ENCODE measurements at regions of chr2 and their contacts with region 1.

Region 1: DNA sequence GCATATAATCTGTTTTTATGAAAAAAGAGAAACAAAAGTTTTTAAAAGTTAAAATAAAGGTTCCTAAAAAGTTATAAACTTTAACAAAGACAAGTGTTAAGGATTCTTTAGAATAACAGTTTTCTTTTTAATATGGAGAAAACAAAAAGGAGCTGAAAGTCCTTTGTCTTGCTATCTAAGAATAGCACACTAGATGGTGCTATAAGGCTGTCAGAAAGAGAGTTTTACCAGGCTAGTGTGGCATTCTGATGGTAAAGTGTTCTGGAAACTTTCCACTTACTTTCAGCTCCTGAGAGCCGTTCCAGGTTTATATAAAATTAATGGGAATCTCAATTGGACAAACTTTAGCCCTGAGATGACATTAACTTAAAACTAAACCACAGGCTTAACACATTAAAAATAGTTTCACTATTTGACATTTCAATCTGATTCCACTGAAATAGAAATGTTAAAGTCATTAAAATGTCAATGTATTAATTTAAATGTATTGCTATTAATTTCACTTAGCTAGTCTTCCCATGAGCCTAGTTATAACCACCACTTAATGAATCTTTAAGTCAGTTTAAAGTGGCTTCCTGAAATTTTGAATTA is 3.7 kb downstream of the FBXO48 start:
- H3K4me3 ChIP-seq: no peak overlapping the region
- H3K27ac ChIP-seq: no peak overlapping the region
- H3K4me1 ChIP-seq: peaks cover 4% of the 10 kb centered on the region; the same call in 1 of the 2 replicates
- CTCF ChIP-seq: peak; percentile 17; the same call in 1 of the 2 replicates

Region 2: GRCh38 chr2:68423966-68424650 is 39.3 kb before region 1 on chr2:
- CTCF ChIA-PET with region 1: no interaction called
- POLR2A ChIA-PET with region 1: no interaction called
- H3K4me3 ChIP-seq: no peak overlapping the region
- H3K27ac ChIP-seq: no peak overlapping the region
- H3K4me1 ChIP-seq: no peaks in the 10 kb centered on the region
- CTCF ChIP-seq: no peak

Region 3: DNA sequence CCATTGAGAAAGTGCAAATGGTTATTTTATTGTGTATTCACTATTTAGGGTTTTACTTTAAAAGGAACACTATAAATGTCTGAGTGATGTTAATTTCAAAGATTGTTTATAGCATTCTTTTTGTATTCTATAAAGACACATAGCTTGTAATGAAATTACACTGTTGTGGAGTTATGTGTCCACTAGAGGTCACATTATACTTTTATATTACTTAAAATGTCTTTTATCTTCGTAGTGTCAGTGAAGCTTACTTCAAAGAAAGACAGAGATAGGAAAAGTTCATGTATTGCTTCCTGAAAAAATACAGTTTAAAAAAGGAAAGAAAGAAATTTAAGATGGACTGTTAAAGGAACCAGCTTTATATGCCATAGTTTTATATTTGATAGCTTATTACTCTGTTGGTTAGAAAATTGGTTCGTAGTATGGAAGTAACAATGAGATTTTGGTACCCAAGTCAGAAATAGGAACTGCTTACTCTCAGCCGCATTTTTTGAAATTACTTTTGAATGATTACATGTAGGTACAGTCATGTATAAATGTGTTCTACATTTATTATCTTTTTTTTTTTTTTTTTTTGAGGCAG is 24.5 kb after region 1 on chr2:
- CTCF ChIA-PET with region 1: interaction called, 15 read pairs
- POLR2A ChIA-PET with region 1: interaction called, 3 read pairs
- H3K4me3 ChIP-seq: no peak overlapping the region
- H3K27ac ChIP-seq: no peak overlapping the region
- H3K4me1 ChIP-seq: no peaks in the 10 kb centered on the region
- CTCF ChIP-seq: no peak

Region 4: DNA sequence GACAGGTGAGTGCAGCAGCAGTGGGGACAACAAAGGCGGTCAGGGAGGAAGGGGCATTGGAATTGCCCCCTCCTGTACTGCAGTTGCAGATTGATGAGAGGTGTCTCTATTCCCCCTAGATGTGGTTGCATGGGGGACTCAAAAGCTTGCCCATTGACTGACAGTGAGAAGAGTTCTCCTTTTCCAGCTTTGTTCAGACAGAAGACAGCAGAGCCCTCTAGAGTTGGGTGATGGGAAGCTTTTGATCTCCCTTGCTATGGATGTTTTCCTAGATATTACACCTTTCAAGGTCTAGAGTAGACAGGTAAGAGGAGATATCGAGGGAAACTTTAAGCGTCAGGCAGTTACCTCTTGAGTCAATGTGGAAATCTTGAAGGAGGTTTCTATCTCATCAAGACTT is 182.9 kb after region 1 on chr2:
- CTCF ChIA-PET with region 1: interaction called, 22 read pairs
- POLR2A ChIA-PET with region 1: no interaction called
- H3K4me3 ChIP-seq: no peak overlapping the region
- H3K27ac ChIP-seq: no peak overlapping the region
- H3K4me1 ChIP-seq: no peaks in the 10 kb centered on the region
- CTCF ChIP-seq: no peak; the same call in 1 of the 2 replicates

Region 5: GRCh38 chr2:68715353-68716041 is 252.1 kb after region 1 on chr2:
- CTCF ChIA-PET with region 1: interaction called, 37 read pairs
- POLR2A ChIA-PET with region 1: interaction called, 3 read pairs
- H3K4me3 ChIP-seq: no peak overlapping the region
- H3K27ac ChIP-seq: no peak overlapping the region
- H3K4me1 ChIP-seq: no peaks in the 10 kb centered on the region
- CTCF ChIP-seq: peak; percentile 26; the same call in 1 of the 2 replicates

Region 6: GRCh38 chr2:68909793-68910674 is 446.7 kb after region 1 on chr2:
- CTCF ChIA-PET with region 1: interaction called, 15 read pairs
- POLR2A ChIA-PET with region 1: no interaction called
- H3K4me3 ChIP-seq: no peak overlapping the region
- H3K27ac ChIP-seq: no peak overlapping the region
- H3K4me1 ChIP-seq: 0 out of 2 replicates have a peak, but pooled peaks cover 2% of the 10 kb centered on the region
- CTCF ChIP-seq: peak; percentile 24; the same call in 1 of the 2 replicates

Measured in HEK293 (cell line).